ENCODE measurements at regions of chr6 and their contacts with region 1.

Region 1: GRCh38 chr6:137497721-137498463 is 3.7 kb upstream of the OLIG3 start:
- DNase-seq: peak; percentile 67
- H3K4me3 Mint-ChIP-seq: peak overlapping the region; percentile 52
- H3K27ac Mint-ChIP-seq: no peak overlapping the region
- H3K4me1 Mint-ChIP-seq: peaks cover 30% of the 10 kb centered on the region
- H3K27me3 Mint-ChIP-seq: peaks cover 82% of the 10 kb centered on the region

Region 2: DNA sequence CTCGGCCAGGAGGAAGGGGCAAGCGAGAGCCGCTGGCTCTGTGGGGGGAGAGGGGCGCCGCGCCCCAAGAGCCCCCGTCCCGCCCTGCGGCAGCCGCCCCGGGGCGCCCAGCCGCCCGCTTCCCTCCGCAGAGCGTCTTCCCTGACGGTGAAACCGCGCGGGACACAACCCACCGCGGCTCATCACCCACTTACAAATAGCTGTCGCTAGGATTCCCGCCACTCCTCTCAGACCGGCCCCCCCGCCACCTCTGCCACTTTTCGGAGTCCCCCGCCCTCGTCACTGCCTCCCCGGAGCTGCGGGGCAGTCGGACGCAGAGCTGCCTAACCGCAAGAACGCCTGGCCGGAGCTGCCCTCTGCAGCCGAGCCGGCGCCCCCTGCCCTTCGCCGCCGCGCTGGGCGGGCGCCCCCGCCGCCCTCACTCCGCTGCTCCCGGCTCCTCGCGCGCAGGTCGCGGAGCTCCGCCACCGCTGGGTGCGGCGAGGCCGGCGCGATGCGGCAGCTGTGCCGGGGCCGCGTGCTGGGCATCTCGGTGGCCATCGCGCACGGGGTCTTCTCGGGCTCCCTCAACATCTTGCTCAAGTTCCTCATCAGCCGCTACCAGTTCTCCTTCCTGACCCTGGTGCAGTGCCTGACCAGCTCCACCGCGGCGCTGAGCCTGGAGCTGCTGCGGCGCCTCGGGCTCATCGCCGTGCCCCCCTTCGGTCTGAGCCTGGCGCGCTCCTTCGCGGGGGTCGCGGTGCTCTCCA is 575.8 kb before region 1 on chr6 and contains the start of gene SLC35D3:
- intact Hi-C with region 1: loop called (anchors 5 kb)
- DNase-seq: peak; percentile 72
- H3K4me3 Mint-ChIP-seq: peak within 1 kb of the TSS; percentile 83
- H3K27ac Mint-ChIP-seq: no peak within 1 kb of the TSS
- H3K4me1 Mint-ChIP-seq: peaks cover 22% of the 10 kb centered on the region
- H3K27me3 Mint-ChIP-seq: peaks cover 61% of the 10 kb centered on the region
- total RNA-seq, gene SLC35D3: not detected in 2 replicates

Region 3: GRCh38 chr6:137518386-137518983 is 20.6 kb after region 1 on chr6:
- intact Hi-C with region 1: loop called (anchors 2 kb)
- DNase-seq: peak; percentile 42
- H3K4me3 Mint-ChIP-seq: no peak overlapping the region
- H3K27ac Mint-ChIP-seq: no peak overlapping the region
- H3K4me1 Mint-ChIP-seq: peaks cover 2% of the 10 kb centered on the region
- H3K27me3 Mint-ChIP-seq: peaks cover 74% of the 10 kb centered on the region

Region 4: DNA sequence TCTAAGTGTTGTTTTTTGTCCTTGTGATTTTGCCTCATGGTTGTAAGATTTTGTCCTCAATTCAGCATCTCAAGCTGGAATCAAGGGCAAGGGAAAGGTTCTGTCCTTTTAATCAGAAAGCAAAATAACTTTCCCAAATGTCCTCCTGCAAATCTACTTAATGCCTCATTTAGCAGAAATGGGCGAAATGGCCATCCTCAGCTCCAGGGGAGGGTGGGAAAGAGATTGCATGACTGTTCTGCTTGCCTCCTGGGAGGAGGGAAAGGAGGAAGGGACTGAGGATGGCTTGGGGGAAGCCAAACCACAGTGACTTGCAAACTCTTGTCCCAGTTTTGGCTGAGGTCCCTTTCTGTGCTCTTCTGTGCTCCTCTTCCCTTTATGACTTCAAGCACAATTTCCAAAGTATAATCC is 412.5 kb after region 1 on chr6:
- intact Hi-C with region 1: no loop called
- DNase-seq: no peak
- H3K4me3 Mint-ChIP-seq: no peak overlapping the region
- H3K27ac Mint-ChIP-seq: no peak overlapping the region
- H3K4me1 Mint-ChIP-seq: peaks cover 45% of the 10 kb centered on the region
- H3K27me3 Mint-ChIP-seq: no peaks in the 10 kb centered on the region

Measured in activated CD4-positive, alpha-beta T cell treated with anti-CD3 and anti-CD28 coated beads, Interleukin-2, amount 10 ng/mL, durations not matched to agents 24 days and 14 days (primary cell).